OCI-LY7 (cell line): ENCODE measurements at regions of chr19 and their contacts with region 1.

Region 1: GRCh38 chr19:28710278-28710677 is 502.7 kb downstream of the UQCRFS1 start:
- DNase-seq: peak; percentile 76
- H3K4me3 ChIP-seq: no peak overlapping the region
- H3K27ac ChIP-seq: no peak overlapping the region
- H3K4me1 ChIP-seq: no peaks in the 10 kb centered on the region
- CTCF ChIP-seq: peak; percentile 96

Region 2: DNA sequence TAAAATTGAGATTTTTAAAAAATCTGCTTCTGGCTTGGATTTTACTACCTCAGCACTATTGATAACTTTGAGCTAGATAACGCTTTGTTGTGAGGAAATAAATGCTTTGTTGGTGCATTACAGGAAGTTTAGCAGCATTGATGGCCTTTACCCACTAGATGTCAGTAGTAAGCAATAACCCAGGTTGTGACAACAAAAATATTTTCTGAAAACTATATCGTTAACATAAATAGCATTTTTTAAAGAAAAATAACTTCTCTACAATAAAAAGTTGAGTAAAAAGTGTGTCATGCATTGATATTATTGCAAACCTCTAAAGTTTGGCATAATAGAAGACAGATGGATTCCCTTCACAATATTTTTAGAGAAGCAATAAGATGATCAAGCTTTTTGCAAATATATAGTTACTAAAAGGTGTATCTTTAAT is 743.9 kb before region 1 on chr19:
- CTCF ChIA-PET with region 1: no interaction called
- POLR2A ChIA-PET with region 1: no interaction called
- intact Hi-C with region 1: loop called (anchors 5 kb)
- DNase-seq: peak; percentile 24
- H3K4me3 ChIP-seq: no peak overlapping the region
- H3K27ac ChIP-seq: no peak overlapping the region
- H3K4me1 ChIP-seq: no peaks in the 10 kb centered on the region
- CTCF ChIP-seq: peak; percentile 90

Region 3: DNA sequence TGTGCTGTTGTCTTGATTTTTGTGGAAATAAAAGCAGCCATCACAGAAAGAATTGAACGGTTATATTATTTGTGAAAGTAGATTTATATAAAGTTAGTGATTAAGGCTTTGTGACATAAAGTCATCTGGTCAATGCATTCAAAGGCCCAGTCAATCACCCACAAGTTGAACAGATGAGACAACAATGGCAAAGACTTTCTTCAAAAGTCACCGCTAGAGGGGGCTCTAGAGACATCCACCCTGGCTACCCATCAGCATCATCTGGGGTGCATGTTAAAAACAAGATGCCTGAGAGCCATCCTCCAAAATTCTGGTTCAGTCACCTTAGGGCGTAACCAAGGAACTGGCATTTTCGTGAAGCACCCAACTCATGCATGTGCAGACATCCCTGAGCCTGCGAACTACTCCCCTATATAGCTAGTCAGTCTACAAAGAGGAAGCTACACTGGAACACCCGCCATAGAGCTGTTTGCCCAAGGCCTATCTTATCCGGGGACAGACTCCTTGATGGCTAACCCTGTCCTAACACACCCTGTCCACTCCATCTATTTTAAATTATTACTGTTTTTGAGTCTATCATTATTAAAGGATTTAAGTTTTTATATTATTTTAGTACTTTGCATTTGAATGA is 467.9 kb before region 1 on chr19:
- CTCF ChIA-PET with region 1: no interaction called
- POLR2A ChIA-PET with region 1: no interaction called
- intact Hi-C with region 1: loop called (anchors 1 kb)
- DNase-seq: peak; percentile 53
- H3K4me3 ChIP-seq: no peak overlapping the region
- H3K27ac ChIP-seq: no peak overlapping the region
- H3K4me1 ChIP-seq: no peaks in the 10 kb centered on the region
- CTCF ChIP-seq: peak; percentile 87

Region 4: DNA sequence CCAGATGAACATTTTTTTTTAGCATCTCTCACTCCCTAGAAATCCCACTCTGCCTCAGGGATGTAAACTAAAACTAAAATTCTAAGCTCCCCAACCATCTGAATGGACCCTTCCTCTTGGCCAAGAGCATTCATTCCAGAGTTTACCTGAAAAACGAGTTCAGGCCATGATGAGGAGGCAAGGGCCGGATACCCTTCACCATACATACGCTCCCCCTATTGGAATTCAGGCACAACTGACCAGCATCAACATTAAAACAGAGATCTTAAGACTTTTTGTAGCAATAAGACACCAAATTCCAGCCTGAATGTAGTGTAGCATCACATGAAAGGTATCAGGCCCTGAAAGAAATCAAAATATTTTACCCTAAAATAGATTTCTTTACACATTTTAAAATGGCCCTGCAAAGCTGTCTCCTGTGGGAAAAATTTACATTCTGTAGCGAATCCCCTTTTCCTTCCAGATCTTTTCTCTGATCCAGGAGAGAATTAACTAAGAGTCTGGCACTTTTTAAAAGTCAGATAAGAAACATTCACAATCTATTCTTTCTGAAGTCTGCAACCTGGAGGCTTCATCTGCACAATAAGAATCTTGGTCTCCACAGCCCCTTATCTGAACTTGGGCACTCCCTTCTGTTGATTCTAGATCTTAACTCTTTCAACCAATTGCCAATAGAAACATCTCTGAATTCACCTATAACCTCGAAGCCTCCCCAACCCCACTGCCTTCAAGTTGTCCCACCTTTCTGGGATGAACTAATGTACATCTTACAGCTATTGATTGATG is 385.8 kb before region 1 on chr19:
- CTCF ChIA-PET with region 1: no interaction called
- POLR2A ChIA-PET with region 1: no interaction called
- intact Hi-C with region 1: loop called (anchors 10 kb)
- DNase-seq: no peak
- H3K4me3 ChIP-seq: no peak overlapping the region
- H3K27ac ChIP-seq: no peak overlapping the region
- H3K4me1 ChIP-seq: no peaks in the 10 kb centered on the region
- CTCF ChIP-seq: 0 out of 2 replicates have a peak, but pooled peaks have one; percentile 19

Region 5: DNA sequence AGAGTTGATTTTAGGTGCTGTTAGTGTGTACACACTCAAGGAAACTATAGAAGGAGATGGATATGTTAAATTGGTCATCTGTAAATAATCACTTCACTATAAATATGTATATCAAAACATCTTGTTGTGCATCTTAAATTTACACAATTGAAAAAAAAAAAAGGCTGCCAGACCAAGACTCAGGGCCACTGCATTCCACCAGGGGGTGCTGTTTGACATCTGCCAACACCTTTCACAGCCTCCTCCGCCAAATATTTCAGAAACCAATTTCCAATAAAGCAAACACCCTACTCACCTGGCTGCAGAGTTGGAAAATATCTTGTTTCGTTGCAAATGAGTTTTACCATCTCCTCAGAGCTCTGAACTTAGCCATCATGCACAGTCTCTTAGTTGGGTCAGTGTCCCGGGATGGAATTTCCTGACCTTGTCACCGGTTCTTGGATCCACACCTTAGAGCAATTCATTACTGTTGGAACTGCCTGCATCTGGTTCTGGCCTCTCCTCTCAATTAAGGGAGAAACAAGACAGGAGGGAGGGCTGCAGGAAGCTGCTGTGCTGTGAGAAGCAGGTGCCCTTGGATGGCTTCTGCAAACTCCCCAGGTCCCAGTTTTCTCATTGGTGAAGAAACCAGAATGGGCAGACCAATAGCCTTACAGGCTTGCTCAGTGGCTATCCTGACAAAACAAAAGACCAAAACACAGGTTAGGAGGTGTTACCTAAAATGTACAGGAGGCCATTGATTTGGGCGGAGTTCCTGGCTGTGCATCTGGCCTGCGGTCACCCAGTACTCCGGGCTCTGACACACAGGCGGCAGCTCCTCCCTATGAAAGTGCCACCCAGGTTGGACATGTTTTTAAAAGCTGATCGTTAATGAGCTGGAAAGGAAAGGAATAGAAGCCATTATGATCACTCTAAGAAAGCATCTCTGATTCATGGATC is 243.9 kb before region 1 on chr19:
- CTCF ChIA-PET with region 1: no interaction called
- POLR2A ChIA-PET with region 1: no interaction called
- intact Hi-C with region 1: loop called (anchors 1 kb)
- DNase-seq: peak; percentile 72
- H3K4me3 ChIP-seq: no peak overlapping the region
- H3K27ac ChIP-seq: no peak overlapping the region
- H3K4me1 ChIP-seq: peaks cover 25% of the 10 kb centered on the region
- CTCF ChIP-seq: peak; percentile 97